ENCODE measurements at regions of chr17 and their contacts with region 1.

Region 1: GRCh38 chr17:2292100-2292499 is 11.5 kb downstream of the SMG6 start:
- DNase-seq: no peak
- H3K4me3 ChIP-seq: no peak overlapping the region
- H3K27ac ChIP-seq: no peak overlapping the region
- H3K4me1 ChIP-seq: peaks cover 13% of the 10 kb centered on the region
- H3K27me3 ChIP-seq: no peaks in the 10 kb centered on the region
- CTCF ChIP-seq: no peak

Region 2: GRCh38 chr17:2348308-2348685 is 56.2 kb after region 1 on chr17:
- CTCF ChIA-PET with region 1: no interaction called
- POLR2A ChIA-PET with region 1: no interaction called
- intact Hi-C with region 1: no loop called
- DNase-seq: no peak
- H3K4me3 ChIP-seq: no peak overlapping the region
- H3K27ac ChIP-seq: peak overlapping the region; percentile 77
- H3K4me1 ChIP-seq: peaks cover 36% of the 10 kb centered on the region
- H3K27me3 ChIP-seq: no peaks in the 10 kb centered on the region
- CTCF ChIP-seq: no peak

Region 3: GRCh38 chr17:2736956-2737355 is 444.9 kb after region 1 on chr17:
- CTCF ChIA-PET with region 1: no interaction called
- POLR2A ChIA-PET with region 1: interaction called, 13 read pairs
- intact Hi-C with region 1: no loop called
- DNase-seq: no peak
- H3K4me3 ChIP-seq: no peak overlapping the region
- H3K27ac ChIP-seq: no peak overlapping the region
- H3K4me1 ChIP-seq: no peaks in the 10 kb centered on the region
- H3K27me3 ChIP-seq: peaks cover 28% of the 10 kb centered on the region
- CTCF ChIP-seq: no peak

Measured in PC-9 (cell line).